ENCODE measurements at regions of chr15 and their contacts with region 1.

Region 1: DNA sequence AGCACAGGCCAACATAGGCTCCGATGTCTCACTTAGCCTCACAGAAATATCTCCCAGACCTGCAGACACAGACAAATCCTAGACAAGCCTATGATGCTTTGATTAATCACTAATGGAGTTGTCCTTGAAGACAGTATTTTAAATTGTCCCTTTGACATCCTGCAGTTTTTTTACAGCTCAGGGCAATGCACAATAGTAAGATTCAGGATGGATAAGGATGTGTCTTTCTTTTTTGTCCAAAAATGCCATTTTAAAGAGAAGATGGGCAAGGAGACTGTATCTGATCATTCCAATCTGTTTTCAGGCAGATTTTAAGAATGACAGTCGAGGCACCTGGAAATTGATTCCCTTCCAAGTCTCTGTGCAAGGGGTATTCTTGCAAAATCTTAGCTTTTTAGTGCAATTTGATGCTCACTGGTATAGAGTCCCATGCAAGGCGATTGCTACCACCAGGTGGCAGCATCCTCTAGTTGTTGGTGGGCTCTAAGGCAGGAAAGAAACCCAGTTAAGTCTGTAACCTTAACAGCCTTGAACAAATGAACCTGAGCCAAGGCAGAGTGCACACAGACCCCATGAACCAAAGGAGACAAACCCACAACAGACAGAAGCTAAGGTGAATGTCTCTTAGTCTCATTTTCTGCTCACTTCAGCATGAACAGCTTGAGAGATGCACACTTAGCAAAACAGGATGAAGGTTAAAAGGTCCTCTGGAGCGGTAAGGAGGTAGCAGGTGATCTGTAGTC is 51.2 kb upstream of the MINAR1 start:
- DNase-seq: peak; percentile 66
- ATAC-seq: peak; percentile 99
- H3K4me3 ChIP-seq: no peak overlapping the region
- H3K27ac ChIP-seq: no peak overlapping the region
- H3K4me1 ChIP-seq: no peaks in the 10 kb centered on the region
- H3K27me3 ChIP-seq: no peaks in the 10 kb centered on the region
- CTCF ChIP-seq: peak; percentile 90

Region 2: GRCh38 chr15:79349525-79349924 is 31.4 kb before region 1 on chr15:
- CTCF ChIA-PET with region 1: interaction called, 13 read pairs
- POLR2A ChIA-PET with region 1: no interaction called
- in situ Hi-C with region 1: no loop called
- intact Hi-C with region 1: no loop called
- DNase-seq: no peak
- ATAC-seq: no peak
- H3K4me3 ChIP-seq: no peak overlapping the region
- H3K27ac ChIP-seq: no peak overlapping the region
- H3K4me1 ChIP-seq: no peaks in the 10 kb centered on the region
- H3K27me3 ChIP-seq: no peaks in the 10 kb centered on the region
- CTCF ChIP-seq: no peak

Region 3: DNA sequence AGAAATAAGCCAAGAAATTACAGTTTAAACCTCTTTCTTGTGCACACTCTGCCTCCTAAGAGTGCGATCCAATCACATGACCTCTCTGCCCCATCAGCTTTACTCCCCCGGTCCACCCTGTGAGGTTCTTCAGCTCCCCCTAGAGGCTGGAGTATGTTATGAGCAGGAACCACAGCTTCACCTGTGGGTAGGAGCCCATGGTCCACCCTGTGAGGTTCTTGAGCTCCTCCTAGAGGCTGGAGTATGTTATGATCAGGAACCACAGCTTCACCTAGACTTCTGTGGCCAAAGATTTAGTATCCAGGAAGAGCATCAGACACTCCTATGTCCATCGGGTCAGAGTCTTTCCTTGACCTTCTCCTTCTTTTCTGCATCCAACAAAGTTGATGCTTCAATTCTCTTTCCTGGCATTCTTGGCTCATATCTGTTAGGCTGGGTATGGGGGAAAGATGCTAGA is 215.2 kb after region 1 on chr15:
- CTCF ChIA-PET with region 1: interaction called, 63 read pairs
- POLR2A ChIA-PET with region 1: no interaction called
- in situ Hi-C with region 1: no loop called
- intact Hi-C with region 1: loop called (anchors 1 kb)
- DNase-seq: peak; percentile 77
- ATAC-seq: peak; percentile 98
- H3K4me3 ChIP-seq: no peak overlapping the region
- H3K27ac ChIP-seq: no peak overlapping the region
- H3K4me1 ChIP-seq: no peaks in the 10 kb centered on the region
- H3K27me3 ChIP-seq: peaks cover 7% of the 10 kb centered on the region
- CTCF ChIP-seq: peak; percentile 99

Measured in Panc1 (cell line).